ENCODE measurements at regions of chr9 and their contacts with region 1.

Region 1: GRCh38 chr9:133792721-133793470 is 54.7 kb upstream of the SARDH start:
- DNase-seq: peak; percentile 88
- H3K4me3 ChIP-seq: no peak overlapping the region
- H3K27ac ChIP-seq: no peak overlapping the region
- H3K4me1 ChIP-seq: peaks cover 0 to 13% (median 6%) of the 10 kb centered on the region in 4 donors
- H3K27me3 ChIP-seq: no peaks in the 10 kb centered on the region
- CTCF ChIP-seq: peak; percentile 84 to 99 (median 96)
- EP300 ChIP-seq: no peak
- POLR2A ChIP-seq: no peak

Region 2: GRCh38 chr9:133715866-133716563 is 76.9 kb before region 1 on chr9:
- intact Hi-C with region 1: no loop called
- DNase-seq: peak; percentile 61
- H3K4me3 ChIP-seq: no peak overlapping the region
- H3K27ac ChIP-seq: no peak overlapping the region
- H3K4me1 ChIP-seq: peaks cover 0 to 4% (median 0%) of the 10 kb centered on the region in 4 donors
- H3K27me3 ChIP-seq: no peaks in the 10 kb centered on the region
- CTCF ChIP-seq: no peak
- EP300 ChIP-seq: no peak
- POLR2A ChIP-seq: no peak

Region 3: GRCh38 chr9:134099123-134099787 is 306.4 kb after region 1 on chr9:
- intact Hi-C with region 1: loop called (anchors 10 kb)
- DNase-seq: no peak
- H3K4me3 ChIP-seq: no peak overlapping the region
- H3K27ac ChIP-seq: no peak overlapping the region
- H3K4me1 ChIP-seq: no peaks in the 10 kb centered on the region
- H3K27me3 ChIP-seq: no peaks in the 10 kb centered on the region
- CTCF ChIP-seq: peak; percentile 37 to 63 (median 60)
- EP300 ChIP-seq: no peak
- POLR2A ChIP-seq: no peak

Measured in sigmoid colon (tissue), 7 donors.